Right ventricle myocardium superior (tissue), 1 donor: ENCODE measurements at regions of chr9 and their contacts with region 1.

Region 1: GRCh38 chr9:121463026-121463807 is 36.4 kb downstream of the GGTA1 start:
- DNase-seq: peak; percentile 76
- ATAC-seq: peak; percentile 72

Region 2: DNA sequence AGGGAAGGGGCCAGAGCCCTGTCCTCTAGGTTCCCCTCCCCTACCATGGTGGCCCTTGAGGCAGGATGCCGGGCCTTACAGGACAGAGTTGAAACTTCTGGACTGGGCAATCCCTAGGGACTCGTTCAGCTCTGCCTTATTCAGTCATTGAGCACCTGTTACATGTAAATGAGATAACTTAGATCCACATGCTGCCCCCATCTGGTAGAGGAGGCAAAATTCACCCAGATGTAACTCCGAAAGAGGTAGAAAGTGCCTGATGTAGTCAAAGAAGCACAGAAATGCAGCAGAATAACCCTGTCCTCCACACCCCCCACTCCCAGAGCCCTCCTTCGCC is 34.9 kb after region 1 on chr9:
- intact Hi-C with region 1: loop called (anchors 2 kb)
- DNase-seq: no peak
- ATAC-seq: peak; percentile 73

Region 3: DNA sequence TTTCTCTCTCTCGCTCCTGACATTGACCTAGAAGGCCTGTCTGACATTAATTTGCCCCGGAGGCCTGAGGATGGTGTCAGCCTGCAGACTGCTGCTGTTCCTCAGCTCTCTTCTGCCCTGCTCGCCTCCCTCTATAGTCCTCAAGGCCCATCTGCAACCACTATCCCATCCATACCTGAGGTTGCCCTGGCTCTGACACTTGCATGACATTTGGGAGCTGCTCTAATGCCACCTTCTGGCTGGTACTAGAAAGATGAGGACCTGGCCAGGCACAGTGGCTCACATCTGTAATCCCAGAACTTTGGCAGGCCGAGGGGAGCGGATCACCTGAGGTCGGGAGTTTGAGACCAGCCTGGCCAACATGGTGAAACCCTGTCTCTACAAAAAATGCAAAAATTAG is 75.0 kb after region 1 on chr9:
- intact Hi-C with region 1: loop called (anchors 10 kb)
- DNase-seq: peak; percentile 47
- ATAC-seq: peak; percentile 43

Region 4: DNA sequence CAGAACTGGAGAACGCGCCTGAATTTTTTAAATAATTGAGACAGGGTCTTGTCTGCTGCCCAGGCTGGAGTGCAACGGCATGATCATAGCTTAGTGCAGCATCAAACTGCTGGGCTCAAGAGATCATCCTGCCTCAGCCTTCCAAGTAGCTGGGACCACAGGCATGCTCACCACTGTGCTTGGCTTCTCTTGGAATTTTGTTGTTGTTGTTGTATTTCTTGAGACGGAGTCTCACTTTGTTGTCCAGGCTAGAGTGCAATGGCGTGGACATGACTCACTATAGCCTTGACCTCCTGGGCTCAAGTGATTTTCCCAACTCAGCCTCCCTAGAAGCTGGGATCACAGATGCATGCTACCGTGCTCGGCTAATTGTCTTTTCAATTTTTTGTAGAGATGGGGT is 129.8 kb after region 1 on chr9:
- intact Hi-C with region 1: no loop called
- DNase-seq: no peak
- ATAC-seq: no peak